ENCODE measurements at regions of chr2 and their contacts with region 1.

Region 1: GRCh38 chr2:50143822-50144575 is 887.9 kb downstream of the NRXN1 start:
- DNase-seq: peak; percentile 66 to 81 (median 77)
- H3K4me3 ChIP-seq: peak overlapping the region in 6 of 7 experiments; percentile 20 to 78 (median 63)
- H3K27ac ChIP-seq: peak overlapping the region; percentile 64 to 75
- H3K4me1 ChIP-seq: peaks cover 0 to 3% (median 0%) of the 10 kb centered on the region in 4 experiments
- H3K27me3 ChIP-seq: peaks cover 0 to 2% (median 0%) of the 10 kb centered on the region in 5 experiments

Region 2: DNA sequence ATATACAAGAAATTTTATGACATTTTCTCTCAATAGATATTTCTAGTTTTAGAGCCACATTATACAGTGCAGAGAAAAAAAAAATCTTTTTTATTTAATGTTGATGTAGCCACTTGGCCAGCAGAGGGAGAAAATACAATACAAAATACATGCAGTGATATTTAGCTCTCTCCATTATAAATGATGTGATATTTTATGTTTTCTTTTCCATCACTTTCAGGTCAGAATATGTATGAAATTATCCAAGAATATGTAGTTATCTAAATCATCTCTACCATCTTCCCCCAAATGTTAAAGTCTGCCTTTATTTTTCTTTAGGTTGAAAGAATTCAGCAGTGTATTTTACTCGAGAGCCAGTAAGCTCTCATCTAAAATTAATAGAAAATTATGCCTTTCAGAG is 456.1 kb before region 1 on chr2:
- CTCF ChIA-PET with region 1: interaction called, 31 read pairs
- POLR2A ChIA-PET with region 1: no interaction called
- DNase-seq: peak; percentile 12 to 44 (median 35)
- H3K4me3 ChIP-seq: no peak overlapping the region
- H3K27ac ChIP-seq: no peak overlapping the region
- H3K4me1 ChIP-seq: no peaks in the 10 kb centered on the region
- H3K27me3 ChIP-seq: peaks cover 0 to 7% (median 0%) of the 10 kb centered on the region in 5 experiments

Region 3: DNA sequence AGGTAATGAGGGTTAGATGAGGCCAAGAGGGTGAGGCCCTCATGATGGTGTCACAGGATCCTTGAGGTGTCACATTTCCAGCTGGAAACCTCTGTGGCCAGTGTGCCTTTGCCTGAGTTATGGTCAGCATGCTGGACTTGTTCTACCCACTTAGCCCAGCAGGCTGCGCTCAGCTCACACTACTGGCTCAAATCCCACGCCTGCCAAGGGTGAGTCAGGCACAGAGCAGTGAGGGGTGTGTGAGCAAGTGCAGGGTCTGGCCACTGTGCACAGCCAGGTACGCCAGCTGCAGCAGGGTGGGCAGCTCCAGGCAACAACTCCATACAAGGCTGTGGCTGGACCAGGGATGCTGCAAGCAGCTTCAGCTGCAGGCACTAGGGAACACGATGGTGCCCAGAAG is 373.1 kb before region 1 on chr2:
- CTCF ChIA-PET with region 1: interaction called, 68 read pairs
- POLR2A ChIA-PET with region 1: interaction called, 3 read pairs
- DNase-seq: peak; percentile 48 to 70 (median 62)
- H3K4me3 ChIP-seq: no peak overlapping the region
- H3K27ac ChIP-seq: no peak overlapping the region
- H3K4me1 ChIP-seq: no peaks in the 10 kb centered on the region
- H3K27me3 ChIP-seq: no peaks in the 10 kb centered on the region

Region 4: DNA sequence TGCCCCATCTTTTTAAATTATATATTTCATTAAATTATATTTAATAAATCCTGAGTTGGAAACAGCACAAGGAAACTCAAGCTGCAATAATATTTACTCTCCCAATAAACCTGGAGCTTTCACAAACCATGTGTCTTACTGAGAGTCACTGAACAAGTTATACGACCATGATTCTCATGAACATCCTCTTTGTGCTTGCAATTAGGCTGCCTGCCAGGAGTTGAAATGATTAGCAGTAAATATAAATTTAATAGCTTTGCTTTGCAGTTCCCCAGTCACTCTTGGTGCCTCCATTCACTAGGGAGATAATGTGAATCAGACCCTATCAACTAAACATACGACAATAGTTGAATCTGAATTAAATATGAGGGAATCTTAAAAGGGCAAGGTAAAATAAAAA is 17.2 kb before region 1 on chr2:
- CTCF ChIA-PET with region 1: interaction called, 12 read pairs
- POLR2A ChIA-PET with region 1: no interaction called
- DNase-seq: no peak
- H3K4me3 ChIP-seq: no peak overlapping the region
- H3K27ac ChIP-seq: no peak overlapping the region
- H3K4me1 ChIP-seq: peaks cover 0 to 4% (median 0%) of the 10 kb centered on the region in 4 experiments
- H3K27me3 ChIP-seq: no peaks in the 10 kb centered on the region

Region 5: DNA sequence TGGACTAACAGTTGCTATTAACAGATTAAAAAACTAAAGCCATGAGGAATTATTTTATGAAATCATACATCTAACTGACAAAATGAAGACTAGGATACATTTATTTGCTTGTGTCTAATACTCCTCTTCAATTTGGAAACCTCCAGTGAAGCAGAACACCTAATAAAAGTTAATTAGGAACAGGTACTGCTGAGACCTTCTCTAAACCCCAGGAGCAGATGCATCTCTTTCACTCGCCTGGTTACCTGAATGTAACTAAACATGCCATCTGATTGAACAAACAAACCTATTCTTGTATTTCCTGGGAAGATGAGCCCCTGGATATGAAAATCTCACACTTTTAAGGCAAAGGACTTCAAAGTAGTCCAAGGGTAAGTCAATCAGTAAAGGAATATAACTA is 10.2 kb before region 1 on chr2:
- CTCF ChIA-PET with region 1: interaction called, 12 read pairs
- POLR2A ChIA-PET with region 1: no interaction called
- DNase-seq: no peak
- H3K4me3 ChIP-seq: no peak overlapping the region
- H3K27ac ChIP-seq: no peak overlapping the region
- H3K4me1 ChIP-seq: no peaks in the 10 kb centered on the region
- H3K27me3 ChIP-seq: no peaks in the 10 kb centered on the region

Measured in common myeloid progenitor, CD34-positive (primary cell).